Head of caudate nucleus (tissue), 42 donors: ENCODE measurements at regions of chr2 and their contacts with region 1.

Region 1: GRCh38 chr2:64914735-64915509 is 74.3 kb upstream of the SLC1A4 start:
- DNase-seq: peak in 1 of 42 donors; percentile 34

Region 2: GRCh38 chr2:64787702-64788101 is 127.2 kb before region 1 on chr2:
- intact Hi-C with region 1: no loop called
- DNase-seq: no peak

Region 3: GRCh38 chr2:64988420-64989125 is 73.7 kb after region 1 on chr2:
- intact Hi-C with region 1: loop called (anchors 10 kb)
- DNase-seq: peak in 39 of 42 donors; percentile 20 to 76 (median 56)

Region 4: GRCh38 chr2:65040400-65041261 is 125.7 kb after region 1 on chr2:
- intact Hi-C with region 1: loop called (anchors 2 kb)
- DNase-seq: peak; percentile 73 to 96 (median 89)